Dendritic cell treated with granulocyte-macrophage colony-stimulating factor and Interleukin-4, amounts not matched to agents 40 ng/mL and 50 ng/mL, for 4 days (primary cell): ENCODE measurements at regions of chr11 and their contacts with region 1.

Region 1: GRCh38 chr11:16543642-16544041 is 187.3 kb upstream of the SOX6 start:
- H3K4me3 Mint-ChIP-seq: no peak overlapping the region
- H3K27ac Mint-ChIP-seq: no peak overlapping the region
- H3K4me1 Mint-ChIP-seq: no peaks in the 10 kb centered on the region
- H3K27me3 Mint-ChIP-seq: no peaks in the 10 kb centered on the region

Region 2: DNA sequence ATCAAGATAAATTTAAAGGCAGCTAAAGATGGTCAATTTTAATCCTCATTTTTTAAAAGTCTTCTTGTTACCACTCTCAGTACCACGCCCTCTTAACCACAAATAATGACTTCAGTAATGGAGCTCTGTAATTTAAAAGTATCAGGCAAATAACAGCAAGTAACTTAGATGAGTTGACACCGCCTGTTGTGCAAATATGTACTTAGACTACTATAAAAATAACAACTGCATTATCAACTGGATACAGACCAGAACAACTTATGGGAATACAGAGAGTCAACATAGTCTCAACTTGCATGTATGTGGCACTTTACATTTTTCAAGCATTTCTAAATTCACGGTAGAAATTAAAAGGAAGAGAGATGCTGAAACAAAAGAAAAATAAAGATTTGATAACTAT is 55.9 kb before region 1 on chr11:
- intact Hi-C with region 1: loop called (anchors 10 kb)
- H3K4me3 Mint-ChIP-seq: no peak overlapping the region
- H3K27ac Mint-ChIP-seq: no peak overlapping the region
- H3K4me1 Mint-ChIP-seq: no peaks in the 10 kb centered on the region
- H3K27me3 Mint-ChIP-seq: no peaks in the 10 kb centered on the region